CD4-positive, alpha-beta memory T cell (primary cell): ENCODE measurements at regions of chr14 and their contacts with region 1.

Region 1: GRCh38 chr14:59483900-59484638 is at the starts of genes JKAMP and L3HYPDH:
- DNase-seq: peak; percentile 95 to 97 (median 95)
- H3K4me3 ChIP-seq: peak within 1 kb of the TSS; percentile 85 to 87
- H3K4me3 Mint-ChIP-seq: peak within 1 kb of the TSS; percentile 92 to 98 (median 96)
- H3K27ac ChIP-seq: peak within 1 kb of the TSS; percentile 82
- H3K27ac Mint-ChIP-seq: peak within 1 kb of the TSS; percentile 90 to 99 (median 96)
- H3K4me1 ChIP-seq: peaks cover 63% of the 10 kb centered on the region
- H3K4me1 Mint-ChIP-seq: peaks cover 52 to 72% (median 58%) of the 10 kb centered on the region in 4 donors
- H3K27me3 ChIP-seq: no peaks in the 10 kb centered on the region
- H3K27me3 Mint-ChIP-seq: no peaks in the 10 kb centered on the region
- total RNA-seq, gene JKAMP: 29.9 to 31.9 TPM
- total RNA-seq, gene L3HYPDH: 52.2 to 52.4 TPM

Region 2: DNA sequence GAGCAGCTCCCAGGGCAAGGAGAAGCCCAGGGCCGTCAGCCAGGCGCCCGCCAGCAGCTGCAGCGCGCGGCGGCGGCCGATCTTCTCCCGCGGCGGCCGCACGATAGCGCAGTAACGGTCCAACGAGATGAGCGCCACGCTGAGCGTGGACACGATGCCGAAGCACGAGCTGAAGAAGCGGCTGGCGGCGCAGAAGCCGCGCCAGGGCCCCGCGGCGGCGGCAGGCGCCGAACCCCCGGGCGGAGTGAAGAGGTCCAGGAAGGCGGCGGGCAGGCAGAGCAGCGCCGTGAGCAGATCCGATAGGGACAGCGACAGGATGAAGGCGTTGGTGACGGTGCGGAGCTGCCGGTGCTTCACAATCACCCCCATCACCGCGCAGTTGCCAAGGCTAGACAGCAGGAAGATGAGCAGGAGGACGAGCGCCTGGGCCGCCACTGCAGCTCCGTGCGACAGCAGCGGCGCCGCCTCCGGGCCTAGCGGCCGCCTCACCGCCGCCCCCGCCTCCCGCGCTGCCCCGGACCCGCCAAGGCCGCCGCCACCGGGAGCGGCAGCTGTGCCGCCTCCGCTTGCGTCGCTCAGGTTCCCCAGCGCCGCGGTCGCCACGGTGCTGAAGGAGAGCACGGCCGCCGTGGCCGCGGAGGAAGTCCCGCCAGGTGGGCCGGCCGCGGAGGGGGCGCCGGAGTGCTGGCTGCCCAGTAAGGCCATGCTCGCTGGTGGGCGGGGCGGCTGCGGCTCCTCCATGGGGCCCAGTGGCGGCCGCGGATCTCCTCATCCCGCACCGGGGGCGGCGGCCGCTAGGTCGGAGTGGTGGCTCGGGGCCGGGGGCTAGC is 19.4 kb before region 1 on chr14:
- CTCF ChIA-PET with region 1: interaction called, 13 read pairs
- POLR2A ChIA-PET with region 1: interaction called, 39 read pairs
- intact Hi-C with region 1: loop called (anchors 1 kb)
- DNase-seq: peak; percentile 63 to 79 (median 67)
- H3K4me3 ChIP-seq: peak overlapping the region in 1 of 2 donors; percentile 54
- H3K4me3 Mint-ChIP-seq: peak overlapping the region; percentile 87 to 94 (median 92)
- H3K27ac ChIP-seq: peak overlapping the region; percentile 33
- H3K27ac Mint-ChIP-seq: peak overlapping the region; percentile 80 to 92 (median 90)
- H3K4me1 ChIP-seq: peaks cover 9% of the 10 kb centered on the region
- H3K4me1 Mint-ChIP-seq: peaks cover 5 to 16% (median 10%) of the 10 kb centered on the region in 4 donors
- H3K27me3 ChIP-seq: no peaks in the 10 kb centered on the region
- H3K27me3 Mint-ChIP-seq: peaks cover 0 to 2% of the 10 kb centered on the region in 2 donors

Region 3: GRCh38 chr14:59507063-59507780 is 23.2 kb after region 1 on chr14:
- CTCF ChIA-PET with region 1: interaction called, 14 read pairs
- POLR2A ChIA-PET with region 1: no interaction called
- intact Hi-C with region 1: loop called (anchors 2 kb)
- DNase-seq: peak; percentile 17 to 59 (median 33)
- H3K4me3 ChIP-seq: no peak overlapping the region
- H3K4me3 Mint-ChIP-seq: no peak overlapping the region
- H3K27ac ChIP-seq: no peak overlapping the region
- H3K27ac Mint-ChIP-seq: peak overlapping the region in 1 of 7 donors; percentile 25
- H3K4me1 ChIP-seq: peaks cover 16% of the 10 kb centered on the region
- H3K4me1 Mint-ChIP-seq: peaks cover 11 to 19% (median 11%) of the 10 kb centered on the region in 4 donors
- H3K27me3 ChIP-seq: no peaks in the 10 kb centered on the region
- H3K27me3 Mint-ChIP-seq: peaks cover 0 to 4% of the 10 kb centered on the region in 2 donors

Region 4: GRCh38 chr14:60151715-60152114 is 667.6 kb after region 1 on chr14:
- CTCF ChIA-PET with region 1: no interaction called
- POLR2A ChIA-PET with region 1: no interaction called
- intact Hi-C with region 1: loop called (anchors 2 kb)
- DNase-seq: peak; percentile 63 to 85 (median 68)
- H3K4me3 ChIP-seq: no peak overlapping the region
- H3K4me3 Mint-ChIP-seq: peak overlapping the region in 7 of 8 donors; percentile 17 to 69 (median 36)
- H3K27ac ChIP-seq: peak overlapping the region; percentile 50
- H3K27ac Mint-ChIP-seq: peak overlapping the region; percentile 90 to 95 (median 94)
- H3K4me1 ChIP-seq: peaks cover 49% of the 10 kb centered on the region
- H3K4me1 Mint-ChIP-seq: peaks cover 35 to 54% (median 44%) of the 10 kb centered on the region in 4 donors
- H3K27me3 ChIP-seq: no peaks in the 10 kb centered on the region
- H3K27me3 Mint-ChIP-seq: no peaks in the 10 kb centered on the region